Natural killer cell (primary cell): ENCODE measurements at regions of chr9 and their contacts with region 1.

Region 1: DNA sequence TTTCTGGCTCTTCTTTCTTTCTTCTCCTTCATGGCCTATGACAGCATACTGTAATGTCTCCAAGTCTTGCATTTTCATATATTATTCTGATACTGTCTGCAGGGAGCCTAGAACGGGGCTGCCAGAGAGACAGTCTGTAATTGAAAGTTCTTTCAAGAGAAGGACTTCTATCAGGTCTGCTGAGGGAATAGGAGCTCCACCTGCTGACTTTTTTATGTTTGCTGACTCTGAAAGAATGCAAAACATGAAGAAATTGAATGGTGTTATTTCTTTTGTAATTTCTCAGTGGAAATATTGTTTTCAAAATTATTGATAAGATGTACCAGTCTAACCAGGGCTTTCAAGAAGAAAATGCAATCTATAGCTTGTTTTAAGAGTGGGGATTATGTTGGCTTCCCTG is 121.9 kb upstream of the RFX3 start:
- DNase-seq: peak in 1 of 2 donors; percentile 19
- ATAC-seq: no peak
- H3K4me3 ChIP-seq: no peak overlapping the region
- H3K4me3 Mint-ChIP-seq: no peak overlapping the region
- H3K27ac ChIP-seq: no peak overlapping the region
- H3K27ac Mint-ChIP-seq: no peak overlapping the region
- H3K4me1 ChIP-seq: no peaks in the 10 kb centered on the region
- H3K4me1 Mint-ChIP-seq: no peaks in the 10 kb centered on the region
- H3K27me3 ChIP-seq: no peaks in the 10 kb centered on the region
- H3K27me3 Mint-ChIP-seq: no peaks in the 10 kb centered on the region
- CTCF ChIP-seq: no peak

Region 2: GRCh38 chr9:3467593-3468219 is 179.9 kb before region 1 on chr9:
- intact Hi-C with region 1: loop called (anchors 10 kb)
- DNase-seq: peak; percentile 35 to 81
- ATAC-seq: peak; percentile 98 to 100 (median 100)
- H3K4me3 ChIP-seq: no peak overlapping the region
- H3K4me3 Mint-ChIP-seq: no peak overlapping the region
- H3K27ac ChIP-seq: no peak overlapping the region
- H3K27ac Mint-ChIP-seq: peak overlapping the region in 1 of 2 donors; percentile 29
- H3K4me1 ChIP-seq: no peaks in the 10 kb centered on the region
- H3K4me1 Mint-ChIP-seq: peaks cover 0 to 5% of the 10 kb centered on the region in 2 donors
- H3K27me3 ChIP-seq: no peaks in the 10 kb centered on the region
- H3K27me3 Mint-ChIP-seq: no peaks in the 10 kb centered on the region
- CTCF ChIP-seq: peak; percentile 85